ENCODE measurements at regions of chr4 and their contacts with region 1.

Region 1: DNA sequence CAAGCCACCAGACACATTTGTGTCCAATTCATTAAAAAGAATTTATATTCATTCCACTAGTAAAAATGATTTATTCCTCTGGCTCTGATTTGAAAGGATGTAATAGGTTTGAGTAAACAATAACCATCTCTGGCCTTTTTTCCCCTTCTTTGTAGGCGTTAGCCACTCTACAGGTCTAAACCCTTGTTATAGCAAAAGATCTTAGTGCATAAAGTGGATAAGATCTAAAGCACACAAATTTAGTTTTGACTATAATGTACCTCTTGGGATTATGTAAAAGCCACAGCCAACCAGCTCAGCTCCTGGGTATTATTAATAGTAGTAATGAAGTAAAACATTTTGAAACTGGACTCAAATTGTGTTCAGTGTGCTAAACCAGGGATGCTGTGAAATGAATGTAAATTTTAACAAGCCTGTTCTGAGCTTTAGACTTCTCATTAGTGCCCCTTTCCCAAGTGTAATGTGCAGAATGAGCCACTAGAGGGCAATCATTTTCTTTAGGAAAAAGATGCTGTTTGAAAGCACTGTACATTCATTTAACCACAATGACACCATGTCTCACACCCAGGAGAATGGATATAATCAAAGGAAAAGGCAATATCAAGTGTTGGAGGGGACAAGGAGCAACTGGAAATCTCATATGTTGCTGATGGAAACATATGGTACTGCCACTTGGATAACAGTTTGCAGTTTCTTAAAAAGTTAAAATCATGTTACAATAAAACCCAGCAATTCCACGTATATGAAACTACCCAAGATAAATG is 69.7 kb downstream of the KLHL8 start:
- DNase-seq: no peak
- ATAC-seq: peak; percentile 80
- H3K4me3 ChIP-seq: no peak overlapping the region
- H3K27ac ChIP-seq: no peak overlapping the region
- H3K4me1 ChIP-seq: no peaks in the 10 kb centered on the region
- H3K27me3 ChIP-seq: no peaks in the 10 kb centered on the region

Region 2: DNA sequence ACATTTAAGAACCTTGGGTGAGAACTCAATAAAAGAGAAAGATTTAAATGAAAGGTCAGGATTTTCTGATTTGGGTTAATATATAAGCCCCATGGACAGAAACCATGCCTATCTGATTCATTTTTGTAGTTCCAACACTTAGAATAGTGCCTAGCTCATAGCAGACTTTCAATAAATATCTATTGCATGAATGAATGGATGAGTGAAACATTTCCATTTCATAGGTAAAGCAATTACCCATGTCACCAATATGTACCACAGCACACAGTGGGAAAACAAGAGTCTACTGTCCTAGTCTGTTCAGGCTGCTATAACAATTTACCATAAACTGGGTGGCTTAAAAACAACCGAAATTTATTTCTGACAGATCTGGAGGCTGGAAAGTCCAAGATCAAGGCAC is 620.5 kb before region 1 on chr4:
- intact Hi-C with region 1: no loop called
- DNase-seq: no peak
- ATAC-seq: no peak
- H3K4me3 ChIP-seq: no peak overlapping the region
- H3K27ac ChIP-seq: no peak overlapping the region
- H3K4me1 ChIP-seq: no peaks in the 10 kb centered on the region
- H3K27me3 ChIP-seq: no peaks in the 10 kb centered on the region

Region 3: GRCh38 chr4:87235020-87235671 is 84.5 kb after region 1 on chr4:
- intact Hi-C with region 1: loop called (anchors 1 to 2 kb)
- DNase-seq: no peak
- ATAC-seq: no peak
- H3K4me3 ChIP-seq: peak overlapping the region in 1 of 2 donors; percentile 79
- H3K27ac ChIP-seq: no peak overlapping the region
- H3K4me1 ChIP-seq: no peaks in the 10 kb centered on the region
- H3K27me3 ChIP-seq: no peaks in the 10 kb centered on the region